CD4-positive, alpha-beta T cell (primary cell): ENCODE measurements at regions of chr10 and their contacts with region 1.

Region 1: GRCh38 chr10:52215745-52216361 is 98.2 kb upstream of the DKK1 start:
- DNase-seq: peak in 9 of 14 experiments; percentile 6 to 69 (median 23)
- ATAC-seq: peak; percentile 66
- H3K4me3 ChIP-seq: no peak overlapping the region
- H3K4me3 Mint-ChIP-seq: no peak overlapping the region
- H3K27ac ChIP-seq: no peak overlapping the region
- H3K27ac Mint-ChIP-seq: no peak overlapping the region
- H3K4me1 ChIP-seq: no peaks in the 10 kb centered on the region
- H3K4me1 Mint-ChIP-seq: no peaks in the 10 kb centered on the region
- H3K27me3 ChIP-seq: no peaks in the 10 kb centered on the region
- H3K27me3 Mint-ChIP-seq: no peaks in the 10 kb centered on the region
- CTCF ChIP-seq: peak; percentile 72

Region 2: GRCh38 chr10:51001587-51001986 is 1214.3 kb before region 1 on chr10:
- CTCF ChIA-PET with region 1: no interaction called
- POLR2A ChIA-PET with region 1: no interaction called
- intact Hi-C with region 1: loop called (anchors 1 to 2 kb)
- DNase-seq: peak in 3 of 14 experiments; percentile 1 to 20 (median 11)
- ATAC-seq: no peak
- H3K4me3 ChIP-seq: no peak overlapping the region
- H3K4me3 Mint-ChIP-seq: no peak overlapping the region
- H3K27ac ChIP-seq: no peak overlapping the region
- H3K27ac Mint-ChIP-seq: no peak overlapping the region
- H3K4me1 ChIP-seq: no peaks in the 10 kb centered on the region
- H3K4me1 Mint-ChIP-seq: no peaks in the 10 kb centered on the region
- H3K27me3 ChIP-seq: peaks cover 0 to 6% of the 10 kb centered on the region in 2 experiments
- H3K27me3 Mint-ChIP-seq: peaks cover 20% of the 10 kb centered on the region
- CTCF ChIP-seq: peak; percentile 73

Region 3: GRCh38 chr10:51389415-51390321 is 826.2 kb before region 1 on chr10:
- CTCF ChIA-PET with region 1: no interaction called
- POLR2A ChIA-PET with region 1: no interaction called
- intact Hi-C with region 1: loop called in 1 of 2 experiments (anchors 10 kb)
- DNase-seq: peak in 12 of 14 experiments; percentile 1 to 45 (median 9)
- ATAC-seq: no peak
- H3K4me3 ChIP-seq: no peak overlapping the region
- H3K4me3 Mint-ChIP-seq: no peak overlapping the region
- H3K27ac ChIP-seq: no peak overlapping the region
- H3K27ac Mint-ChIP-seq: no peak overlapping the region
- H3K4me1 ChIP-seq: no peaks in the 10 kb centered on the region
- H3K4me1 Mint-ChIP-seq: no peaks in the 10 kb centered on the region
- H3K27me3 ChIP-seq: no peaks in the 10 kb centered on the region
- H3K27me3 Mint-ChIP-seq: no peaks in the 10 kb centered on the region
- CTCF ChIP-seq: peak; percentile 43

Region 4: DNA sequence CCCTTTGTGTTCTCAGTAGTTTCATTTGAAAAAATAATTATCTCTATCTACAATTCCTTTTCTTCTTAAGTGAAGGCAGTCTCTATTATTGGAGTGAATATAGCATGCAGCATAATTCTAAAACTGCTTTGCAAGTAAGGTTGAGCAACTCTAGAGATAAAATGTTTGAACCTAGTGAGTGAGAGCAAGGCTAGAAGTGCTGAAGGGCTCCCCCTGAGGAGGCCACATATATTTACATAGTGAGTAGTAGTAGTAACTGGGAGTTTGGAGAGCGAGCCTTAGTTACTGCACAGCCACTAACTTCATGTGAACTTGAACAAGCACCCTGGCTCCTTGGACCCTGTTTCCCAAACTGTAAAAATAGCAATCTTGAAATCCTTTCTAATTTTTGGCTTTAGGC is 43.3 kb before region 1 on chr10:
- CTCF ChIA-PET with region 1: no interaction called
- POLR2A ChIA-PET with region 1: no interaction called
- intact Hi-C with region 1: no loop called
- DNase-seq: no peak
- ATAC-seq: no peak
- H3K4me3 ChIP-seq: no peak overlapping the region
- H3K4me3 Mint-ChIP-seq: no peak overlapping the region
- H3K27ac ChIP-seq: no peak overlapping the region
- H3K27ac Mint-ChIP-seq: no peak overlapping the region
- H3K4me1 ChIP-seq: no peaks in the 10 kb centered on the region
- H3K4me1 Mint-ChIP-seq: no peaks in the 10 kb centered on the region
- H3K27me3 ChIP-seq: no peaks in the 10 kb centered on the region
- H3K27me3 Mint-ChIP-seq: no peaks in the 10 kb centered on the region
- CTCF ChIP-seq: no peak

Region 5: GRCh38 chr10:52662256-52662655 is 446.4 kb after region 1 on chr10:
- CTCF ChIA-PET with region 1: no interaction called
- POLR2A ChIA-PET with region 1: no interaction called
- intact Hi-C with region 1: loop called in 1 of 2 experiments (anchors 5 kb)
- DNase-seq: no peak
- ATAC-seq: no peak
- H3K4me3 ChIP-seq: no peak overlapping the region
- H3K4me3 Mint-ChIP-seq: no peak overlapping the region
- H3K27ac ChIP-seq: no peak overlapping the region
- H3K27ac Mint-ChIP-seq: no peak overlapping the region
- H3K4me1 ChIP-seq: no peaks in the 10 kb centered on the region
- H3K4me1 Mint-ChIP-seq: no peaks in the 10 kb centered on the region
- H3K27me3 ChIP-seq: no peaks in the 10 kb centered on the region
- H3K27me3 Mint-ChIP-seq: no peaks in the 10 kb centered on the region
- CTCF ChIP-seq: no peak